OCI-LY7 (cell line): ENCODE measurements at regions of chr2 and their contacts with region 1.

Region 1: GRCh38 chr2:163345908-163346573 is 389.8 kb downstream of the FIGN start:
- DNase-seq: peak; percentile 59
- H3K4me3 ChIP-seq: no peak overlapping the region
- H3K27ac ChIP-seq: no peak overlapping the region
- H3K4me1 ChIP-seq: no peaks in the 10 kb centered on the region
- CTCF ChIP-seq: peak; percentile 90

Region 2: DNA sequence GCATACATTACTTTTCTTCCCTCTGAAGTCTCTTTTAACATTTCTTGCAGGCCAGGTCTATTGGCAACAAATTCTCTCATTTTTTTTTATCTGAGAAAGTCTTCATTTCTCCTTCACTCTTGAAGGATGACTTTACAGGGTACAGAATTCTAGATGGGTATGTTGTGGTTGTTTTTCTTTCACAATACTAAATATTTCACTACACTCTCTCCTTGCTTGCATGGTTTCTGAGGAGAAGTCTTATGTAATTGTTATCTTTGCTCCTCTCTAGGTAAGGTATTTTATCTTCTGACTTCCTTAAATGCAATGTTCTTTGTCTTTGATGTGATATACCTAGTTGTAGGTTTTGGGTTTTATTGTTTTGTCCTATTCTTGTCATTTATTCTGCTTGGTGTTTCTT is 18.7 kb after region 1 on chr2:
- CTCF ChIA-PET with region 1: no interaction called
- POLR2A ChIA-PET with region 1: no interaction called
- intact Hi-C with region 1: no loop called
- DNase-seq: no peak
- H3K4me3 ChIP-seq: no peak overlapping the region
- H3K27ac ChIP-seq: no peak overlapping the region
- H3K4me1 ChIP-seq: no peaks in the 10 kb centered on the region
- CTCF ChIP-seq: no peak

Region 3: DNA sequence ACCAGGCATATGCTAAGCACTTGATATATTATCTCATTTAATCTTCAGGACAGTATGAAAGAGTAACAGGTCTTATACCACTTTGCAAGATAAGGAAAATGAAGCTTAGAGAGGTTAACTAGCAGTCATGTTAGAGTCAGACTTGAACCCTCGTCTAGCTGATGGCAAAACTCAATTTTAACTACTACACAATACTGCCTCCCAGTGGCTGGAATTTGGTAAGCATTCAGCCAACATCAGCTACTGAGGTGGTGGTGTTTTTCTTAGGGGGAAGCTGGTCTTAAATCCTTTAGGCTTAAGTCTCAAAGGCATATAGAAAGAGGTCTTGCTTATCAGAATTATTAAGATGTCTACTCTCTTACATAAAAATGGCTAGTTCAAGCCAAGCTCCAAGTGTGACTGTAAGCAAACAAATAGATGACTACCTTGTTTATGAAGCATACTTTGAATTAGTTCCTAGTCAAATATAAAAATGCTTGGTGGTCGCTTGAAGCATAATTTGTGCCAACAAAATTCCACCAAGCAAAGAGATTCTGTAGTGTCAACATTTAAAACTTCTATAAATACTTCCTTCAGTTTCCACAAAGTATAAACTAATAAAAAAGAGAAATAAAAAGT is 715.2 kb after region 1 on chr2:
- CTCF ChIA-PET with region 1: no interaction called
- POLR2A ChIA-PET with region 1: interaction called, 3 read pairs
- intact Hi-C with region 1: loop called (anchors 10 kb)
- DNase-seq: peak; percentile 16
- H3K4me3 ChIP-seq: no peak overlapping the region
- H3K27ac ChIP-seq: no peak overlapping the region
- H3K4me1 ChIP-seq: no peaks in the 10 kb centered on the region
- CTCF ChIP-seq: peak; percentile 79

Region 4: DNA sequence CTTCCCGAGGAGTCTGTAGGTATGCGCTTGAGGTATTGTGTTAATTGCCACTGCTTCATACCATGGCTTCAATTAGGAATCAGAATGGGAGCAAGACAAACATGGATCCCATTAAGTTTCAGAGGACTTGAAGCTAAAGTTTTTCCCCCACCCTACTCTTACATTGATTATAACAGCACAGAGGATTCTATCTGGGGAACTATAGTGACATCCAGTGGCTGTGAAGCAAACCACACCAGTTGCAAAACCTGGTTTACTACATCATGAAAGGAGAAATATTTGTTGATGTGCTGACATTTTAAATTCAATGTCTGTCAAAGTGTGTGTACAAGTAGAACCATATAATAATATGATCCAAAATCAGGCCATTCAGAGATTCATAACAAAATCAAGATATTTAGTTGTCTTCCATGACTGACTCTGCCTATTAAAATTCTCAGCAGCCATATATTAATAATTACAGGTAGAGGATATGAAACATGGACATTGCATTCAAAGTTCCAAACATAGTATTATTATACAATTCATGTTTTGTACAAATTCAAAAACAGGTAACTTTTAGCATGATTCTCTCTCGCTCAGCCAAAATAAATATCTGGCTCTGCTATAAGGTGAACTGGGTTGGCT is 1192.3 kb after region 1 on chr2:
- CTCF ChIA-PET with region 1: no interaction called
- POLR2A ChIA-PET with region 1: no interaction called
- intact Hi-C with region 1: loop called (anchors 5 kb)
- DNase-seq: peak; percentile 23
- H3K4me3 ChIP-seq: no peak overlapping the region
- H3K27ac ChIP-seq: no peak overlapping the region
- H3K4me1 ChIP-seq: no peaks in the 10 kb centered on the region
- CTCF ChIP-seq: peak; percentile 81